Caco-2 (cell line): ENCODE measurements at regions of chr9 and their contacts with region 1.

Region 1: DNA sequence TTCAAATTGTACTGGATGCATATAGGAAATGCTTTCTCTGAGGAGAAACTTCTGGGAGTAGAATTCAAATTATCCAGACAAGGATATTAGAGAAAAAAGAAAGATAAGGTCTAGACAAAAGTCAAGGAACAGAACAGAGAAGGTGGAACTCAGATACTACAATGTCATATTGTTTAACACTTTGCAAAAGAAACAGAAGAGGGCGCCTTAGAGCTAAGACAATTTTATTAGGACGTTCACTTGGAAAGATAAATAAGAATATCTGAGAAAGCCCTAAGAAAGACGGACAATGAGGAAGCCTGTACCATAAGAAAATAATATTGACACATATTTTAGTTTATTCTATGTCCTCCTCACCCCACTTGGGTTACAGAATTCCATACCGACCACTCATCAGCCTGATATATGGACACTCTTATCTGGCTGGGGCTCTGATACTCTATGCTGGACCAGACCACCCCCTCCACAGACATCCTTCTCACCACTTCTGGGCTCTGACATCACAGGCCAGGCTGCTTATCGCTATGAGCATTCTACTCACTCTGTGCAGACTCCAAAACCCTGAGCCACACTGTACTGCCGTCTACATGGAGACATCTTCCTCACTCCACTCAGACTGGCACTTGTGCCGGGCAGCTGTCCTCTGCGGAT is 9.1 kb upstream of the AK3 start:
- DNase-seq: peak in 1 of 2 experiments; percentile 12
- H3K4me3 ChIP-seq: no peak overlapping the region
- H3K4me3 Mint-ChIP-seq: no peak overlapping the region
- H3K27ac Mint-ChIP-seq: no peak overlapping the region
- H3K4me1 ChIP-seq: no peaks in the 10 kb centered on the region
- H3K4me1 Mint-ChIP-seq: peaks cover 6% of the 10 kb centered on the region
- H3K27me3 ChIP-seq: no peaks in the 10 kb centered on the region
- H3K27me3 Mint-ChIP-seq: peaks cover 6% of the 10 kb centered on the region
- CTCF ChIP-seq: peak; percentile 13 to 24

Region 2: DNA sequence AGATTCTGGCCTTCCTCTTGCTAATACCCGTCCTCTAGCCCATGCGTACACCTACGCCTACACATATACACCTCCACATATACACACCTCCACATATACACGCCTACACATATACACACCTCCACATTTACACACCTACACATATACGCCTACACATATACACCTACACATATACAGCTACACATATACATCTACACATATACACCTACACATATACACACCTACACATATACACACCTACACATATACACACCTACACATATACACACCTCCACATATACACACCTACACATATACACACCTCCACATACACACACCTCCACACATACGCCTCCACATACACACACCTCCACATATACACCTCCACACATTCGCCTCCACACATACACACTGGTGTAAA is 36.3 kb before region 1 on chr9:
- CTCF ChIA-PET with region 1: no interaction called
- POLR2A ChIA-PET with region 1: no interaction called
- intact Hi-C with region 1: no loop called
- DNase-seq: no peak
- H3K4me3 ChIP-seq: no peak overlapping the region
- H3K4me3 Mint-ChIP-seq: no peak overlapping the region
- H3K27ac Mint-ChIP-seq: no peak overlapping the region
- H3K4me1 ChIP-seq: no peaks in the 10 kb centered on the region
- H3K4me1 Mint-ChIP-seq: no peaks in the 10 kb centered on the region
- H3K27me3 ChIP-seq: no peaks in the 10 kb centered on the region
- H3K27me3 Mint-ChIP-seq: no peaks in the 10 kb centered on the region
- CTCF ChIP-seq: no peak

Region 3: DNA sequence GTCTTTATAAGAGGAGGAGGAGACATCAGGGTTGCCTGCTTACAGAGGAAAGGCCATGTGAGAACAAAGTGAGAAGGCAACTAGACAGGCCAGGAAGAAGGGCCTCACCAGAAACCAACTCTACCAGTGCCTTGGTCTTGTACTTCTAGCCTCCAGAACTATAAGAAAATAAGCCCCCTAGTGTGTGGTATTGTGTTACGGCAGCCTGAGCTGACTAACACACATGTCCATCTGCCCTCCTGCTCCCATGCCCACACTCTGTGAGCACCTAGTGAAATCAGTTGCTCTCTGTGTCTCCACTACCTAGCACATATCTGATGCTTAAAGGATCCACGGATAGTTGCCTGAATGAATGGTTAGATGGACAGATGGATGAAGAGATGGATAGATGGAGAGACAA is 16.0 kb before region 1 on chr9:
- CTCF ChIA-PET with region 1: no interaction called
- POLR2A ChIA-PET with region 1: no interaction called
- intact Hi-C with region 1: no loop called
- DNase-seq: no peak
- H3K4me3 ChIP-seq: no peak overlapping the region
- H3K4me3 Mint-ChIP-seq: no peak overlapping the region
- H3K27ac Mint-ChIP-seq: no peak overlapping the region
- H3K4me1 ChIP-seq: 0 out of 2 replicates have a peak, but pooled peaks cover 3% of the 10 kb centered on the region
- H3K4me1 Mint-ChIP-seq: no peaks in the 10 kb centered on the region
- H3K27me3 ChIP-seq: no peaks in the 10 kb centered on the region
- H3K27me3 Mint-ChIP-seq: no peaks in the 10 kb centered on the region
- CTCF ChIP-seq: no peak

Region 4: DNA sequence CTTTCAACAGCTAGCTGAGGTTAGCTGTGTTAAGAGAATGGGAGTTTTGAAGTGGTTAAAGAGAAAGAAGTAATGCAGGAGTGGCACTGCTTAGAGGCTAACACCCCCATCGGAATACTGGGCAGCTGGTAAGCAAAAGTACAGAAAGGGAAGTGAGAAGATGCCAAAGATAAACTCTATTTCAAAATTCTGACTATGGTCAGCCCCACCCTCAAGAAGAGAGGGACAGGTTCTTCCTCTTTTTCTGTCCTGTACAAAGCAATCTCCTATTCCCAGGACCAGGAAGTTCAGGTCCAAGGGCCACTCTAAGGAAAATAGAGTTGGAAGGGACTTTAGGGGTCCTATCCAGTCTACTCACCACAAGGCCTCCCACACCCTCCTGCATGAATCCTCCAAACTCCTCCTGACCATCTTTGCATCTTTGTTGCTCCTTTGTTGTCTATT is 189.0 kb after region 1 on chr9:
- CTCF ChIA-PET with region 1: no interaction called
- POLR2A ChIA-PET with region 1: no interaction called
- intact Hi-C with region 1: no loop called
- DNase-seq: no peak
- H3K4me3 ChIP-seq: no peak overlapping the region
- H3K4me3 Mint-ChIP-seq: no peak overlapping the region
- H3K27ac Mint-ChIP-seq: no peak overlapping the region
- H3K4me1 ChIP-seq: no peaks in the 10 kb centered on the region
- H3K4me1 Mint-ChIP-seq: peaks cover 7% of the 10 kb centered on the region
- H3K27me3 ChIP-seq: no peaks in the 10 kb centered on the region
- H3K27me3 Mint-ChIP-seq: no peaks in the 10 kb centered on the region
- CTCF ChIP-seq: no peak

Region 5: DNA sequence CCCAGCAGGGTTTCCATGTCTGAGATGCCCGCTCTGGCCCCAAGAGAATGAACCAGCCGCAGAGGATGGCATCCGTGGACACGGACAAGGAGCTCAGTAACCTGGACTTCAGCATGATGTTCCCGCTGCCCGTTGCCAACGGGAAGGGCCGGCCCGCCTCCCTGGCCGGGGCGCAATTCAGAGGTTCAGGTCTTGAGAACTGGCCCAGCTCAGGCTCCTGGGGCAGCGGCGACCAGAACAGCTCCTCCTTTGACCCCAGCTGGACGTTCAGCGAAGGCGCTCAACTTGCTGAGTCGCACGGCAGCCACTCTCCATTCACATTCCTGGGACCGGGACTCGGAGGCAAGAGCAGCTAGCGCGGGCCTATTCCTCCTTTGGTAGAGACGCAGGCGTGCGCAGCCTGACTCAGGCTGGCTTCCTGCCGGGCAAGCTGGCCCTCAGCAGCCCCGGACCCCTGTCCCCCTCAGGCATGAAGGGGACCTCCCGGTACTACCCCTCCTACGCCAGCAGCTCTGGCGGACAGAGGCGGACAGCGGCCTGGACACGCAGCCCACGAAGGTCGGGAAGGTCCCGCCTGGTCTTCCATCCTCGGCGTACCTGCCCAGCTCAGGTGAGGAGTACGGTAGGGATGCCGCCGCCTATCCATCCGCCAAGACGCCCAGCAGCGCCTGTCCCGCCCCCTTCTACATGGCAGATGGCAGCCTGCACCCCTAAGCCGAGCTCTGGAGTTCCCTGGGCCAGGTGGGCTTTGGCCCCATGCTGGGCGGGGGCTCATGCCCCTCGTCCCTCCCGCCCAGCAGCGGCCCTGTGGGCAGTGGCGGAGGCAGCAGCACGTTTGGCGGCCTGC is 360.9 kb after region 1 on chr9:
- CTCF ChIA-PET with region 1: no interaction called
- POLR2A ChIA-PET with region 1: no interaction called
- intact Hi-C with region 1: no loop called
- DNase-seq: no peak
- H3K4me3 ChIP-seq: no peak overlapping the region
- H3K4me3 Mint-ChIP-seq: no peak overlapping the region
- H3K27ac Mint-ChIP-seq: no peak overlapping the region
- H3K4me1 ChIP-seq: no peaks in the 10 kb centered on the region
- H3K4me1 Mint-ChIP-seq: no peaks in the 10 kb centered on the region
- H3K27me3 ChIP-seq: no peaks in the 10 kb centered on the region
- H3K27me3 Mint-ChIP-seq: no peaks in the 10 kb centered on the region
- CTCF ChIP-seq: no peak

Region 6: DNA sequence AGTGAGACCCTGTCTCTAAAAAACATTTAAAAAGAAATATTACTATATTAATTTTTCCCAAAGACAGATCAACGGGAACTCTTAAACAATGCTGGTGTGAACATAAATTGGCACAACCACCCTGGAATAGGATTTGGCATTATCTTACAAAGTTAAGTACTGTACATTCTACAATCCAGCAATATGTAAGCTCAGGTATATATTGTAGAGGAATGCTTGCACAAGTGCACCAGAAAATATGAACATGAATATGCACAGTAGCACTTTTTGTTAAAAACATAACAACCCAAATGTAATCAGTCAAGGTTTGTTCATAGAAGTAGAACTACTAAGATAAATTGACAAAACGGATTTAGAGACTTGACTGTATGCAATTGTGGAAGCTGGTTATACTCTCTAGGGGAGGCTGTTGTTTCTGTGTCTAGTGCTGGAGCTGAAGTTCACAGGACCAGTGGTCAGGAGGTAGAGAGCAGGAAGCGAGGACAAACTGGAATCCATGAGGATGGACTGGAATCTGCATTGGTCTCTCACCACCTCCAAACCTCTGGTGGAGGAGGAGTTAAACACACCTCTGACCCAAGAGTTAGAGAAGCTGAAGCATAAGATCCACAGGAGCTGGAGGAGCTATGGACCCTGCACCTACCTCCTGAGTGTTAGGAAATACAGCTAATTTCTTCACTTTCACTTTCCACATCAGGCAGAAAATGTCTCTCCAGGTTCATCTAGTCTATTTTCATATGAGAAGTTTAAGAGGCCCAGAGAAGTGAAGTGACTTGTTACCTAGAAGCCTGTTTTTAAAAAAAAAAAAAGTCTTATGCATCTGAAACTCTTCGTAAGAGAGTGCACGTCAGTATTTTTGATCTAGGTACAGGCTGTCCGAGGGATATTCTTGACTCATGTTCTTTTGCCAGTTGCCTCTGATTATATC is 858.4 kb after region 1 on chr9:
- CTCF ChIA-PET with region 1: no interaction called
- POLR2A ChIA-PET with region 1: no interaction called
- intact Hi-C with region 1: loop called (anchors 10 kb)
- DNase-seq: peak in 1 of 2 experiments; percentile 1
- H3K4me3 ChIP-seq: no peak overlapping the region
- H3K4me3 Mint-ChIP-seq: peak overlapping the region; percentile 42
- H3K27ac Mint-ChIP-seq: no peak overlapping the region
- H3K4me1 ChIP-seq: no peaks in the 10 kb centered on the region
- H3K4me1 Mint-ChIP-seq: no peaks in the 10 kb centered on the region
- H3K27me3 ChIP-seq: no peaks in the 10 kb centered on the region
- H3K27me3 Mint-ChIP-seq: peaks cover 2% of the 10 kb centered on the region
- CTCF ChIP-seq: no peak